Left ventricle myocardium inferior (tissue), 1 donor: ENCODE measurements at regions of chr2 and their contacts with region 1.

Region 1: DNA sequence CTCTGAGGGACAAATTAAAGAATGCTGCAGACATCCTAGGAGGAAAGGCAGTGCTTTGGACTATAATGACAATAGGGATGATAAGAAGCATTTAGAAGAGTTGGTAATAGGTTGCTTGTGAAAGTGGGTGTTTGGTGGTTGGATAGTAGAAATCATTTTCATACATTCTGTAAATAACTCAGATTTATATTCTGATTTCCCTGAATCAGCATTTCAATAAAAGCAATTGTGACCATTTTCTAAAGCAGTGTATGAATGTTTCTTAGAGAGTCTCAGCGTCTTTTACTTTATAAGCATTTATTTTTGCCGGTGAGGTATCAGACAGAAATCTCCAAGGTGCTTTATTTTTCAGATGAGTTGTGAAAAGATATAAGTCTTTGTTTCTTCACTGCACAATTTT is 1099.0 kb upstream of the LRRTM1 start:
- DNase-seq: no peak
- H3K4me3 ChIP-seq: no peak overlapping the region
- H3K27ac ChIP-seq: no peak overlapping the region
- H3K4me1 ChIP-seq: no peaks in the 10 kb centered on the region
- H3K27me3 ChIP-seq: no peaks in the 10 kb centered on the region
- CTCF ChIP-seq: no peak

Region 2: GRCh38 chr2:81158505-81158904 is 245.0 kb before region 1 on chr2:
- intact Hi-C with region 1: loop called (anchors 10 kb)
- DNase-seq: no peak
- H3K4me3 ChIP-seq: no peak overlapping the region
- H3K27ac ChIP-seq: no peak overlapping the region
- H3K4me1 ChIP-seq: no peaks in the 10 kb centered on the region
- H3K27me3 ChIP-seq: no peaks in the 10 kb centered on the region
- CTCF ChIP-seq: no peak

Region 3: DNA sequence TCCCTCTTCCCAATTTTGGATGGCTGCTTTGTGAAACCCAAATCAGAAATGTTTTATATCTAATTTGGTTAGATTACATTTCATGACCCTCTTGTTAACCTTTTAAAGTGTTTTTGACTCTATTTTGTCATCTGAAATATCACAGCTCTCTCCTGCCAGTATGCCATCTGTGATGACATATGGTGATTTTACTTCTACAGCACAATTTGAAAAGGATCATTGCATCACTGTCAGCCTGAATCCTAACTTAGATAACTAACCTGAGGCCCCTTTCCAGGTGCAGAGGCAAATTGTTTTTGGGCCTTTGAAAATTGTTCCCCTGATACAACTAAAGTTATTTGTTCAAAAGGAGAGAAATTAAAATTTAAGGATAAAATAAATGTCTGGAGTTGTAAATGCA is 75.6 kb before region 1 on chr2:
- intact Hi-C with region 1: no loop called
- DNase-seq: no peak
- H3K4me3 ChIP-seq: no peak overlapping the region
- H3K27ac ChIP-seq: no peak overlapping the region
- H3K4me1 ChIP-seq: no peaks in the 10 kb centered on the region
- H3K27me3 ChIP-seq: no peaks in the 10 kb centered on the region
- CTCF ChIP-seq: no peak